ENCODE measurements at regions of chr3 and their contacts with region 1.

Region 1: GRCh38 chr3:2579206-2579605 is 480.5 kb downstream of the CNTN4 start:
- DNase-seq: no peak
- H3K4me3 ChIP-seq: no peak overlapping the region
- H3K4me3 Mint-ChIP-seq: no peak overlapping the region
- H3K27ac Mint-ChIP-seq: no peak overlapping the region
- H3K4me1 ChIP-seq: no peaks in the 10 kb centered on the region
- H3K4me1 Mint-ChIP-seq: no peaks in the 10 kb centered on the region
- H3K27me3 ChIP-seq: no peaks in the 10 kb centered on the region
- H3K27me3 Mint-ChIP-seq: no peaks in the 10 kb centered on the region
- CTCF ChIP-seq: no peak

Region 2: DNA sequence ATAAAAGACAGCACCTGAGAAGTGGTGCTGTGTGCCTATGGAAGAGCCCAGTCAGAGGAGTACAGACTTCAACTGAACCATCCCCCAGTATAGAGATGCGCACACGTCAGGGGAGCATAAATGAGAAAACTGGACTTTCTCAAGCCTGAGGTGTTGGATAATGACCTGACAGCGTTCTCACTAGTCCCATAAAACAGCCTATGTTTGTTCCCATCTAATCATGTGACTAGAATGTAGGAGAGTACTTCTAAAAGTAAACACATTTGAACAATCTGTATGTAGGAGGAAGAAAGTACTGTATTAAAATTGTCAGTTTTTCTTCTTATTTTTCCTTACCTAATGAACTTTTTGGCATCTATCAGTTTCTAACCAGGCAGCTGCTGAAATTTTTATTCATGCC is 18.4 kb after region 1 on chr3:
- CTCF ChIA-PET with region 1: no interaction called
- POLR2A ChIA-PET with region 1: no interaction called
- intact Hi-C with region 1: loop called (anchors 1 kb)
- DNase-seq: no peak
- H3K4me3 ChIP-seq: no peak overlapping the region
- H3K4me3 Mint-ChIP-seq: no peak overlapping the region
- H3K27ac Mint-ChIP-seq: no peak overlapping the region
- H3K4me1 ChIP-seq: peaks cover 12% of the 10 kb centered on the region
- H3K4me1 Mint-ChIP-seq: peaks cover 14% of the 10 kb centered on the region
- H3K27me3 ChIP-seq: no peaks in the 10 kb centered on the region
- H3K27me3 Mint-ChIP-seq: no peaks in the 10 kb centered on the region
- CTCF ChIP-seq: no peak

Region 3: GRCh38 chr3:2623436-2623835 is 44.2 kb after region 1 on chr3:
- CTCF ChIA-PET with region 1: no interaction called
- POLR2A ChIA-PET with region 1: no interaction called
- intact Hi-C with region 1: no loop called
- DNase-seq: peak in 1 of 2 experiments; percentile 1
- H3K4me3 ChIP-seq: no peak overlapping the region
- H3K4me3 Mint-ChIP-seq: no peak overlapping the region
- H3K27ac Mint-ChIP-seq: no peak overlapping the region
- H3K4me1 ChIP-seq: no peaks in the 10 kb centered on the region; the same call in none of the 2 replicates
- H3K4me1 Mint-ChIP-seq: peaks cover 9% of the 10 kb centered on the region
- H3K27me3 ChIP-seq: no peaks in the 10 kb centered on the region
- H3K27me3 Mint-ChIP-seq: no peaks in the 10 kb centered on the region
- CTCF ChIP-seq: no peak

Region 4: GRCh38 chr3:2643606-2644005 is 64.4 kb after region 1 on chr3:
- CTCF ChIA-PET with region 1: no interaction called
- POLR2A ChIA-PET with region 1: no interaction called
- intact Hi-C with region 1: no loop called
- DNase-seq: no peak
- H3K4me3 ChIP-seq: no peak overlapping the region
- H3K4me3 Mint-ChIP-seq: no peak overlapping the region
- H3K27ac Mint-ChIP-seq: no peak overlapping the region
- H3K4me1 ChIP-seq: no peaks in the 10 kb centered on the region
- H3K4me1 Mint-ChIP-seq: no peaks in the 10 kb centered on the region
- H3K27me3 ChIP-seq: no peaks in the 10 kb centered on the region
- H3K27me3 Mint-ChIP-seq: no peaks in the 10 kb centered on the region
- CTCF ChIP-seq: no peak